ENCODE measurements at regions of chr2 and their contacts with region 1.

Region 1: DNA sequence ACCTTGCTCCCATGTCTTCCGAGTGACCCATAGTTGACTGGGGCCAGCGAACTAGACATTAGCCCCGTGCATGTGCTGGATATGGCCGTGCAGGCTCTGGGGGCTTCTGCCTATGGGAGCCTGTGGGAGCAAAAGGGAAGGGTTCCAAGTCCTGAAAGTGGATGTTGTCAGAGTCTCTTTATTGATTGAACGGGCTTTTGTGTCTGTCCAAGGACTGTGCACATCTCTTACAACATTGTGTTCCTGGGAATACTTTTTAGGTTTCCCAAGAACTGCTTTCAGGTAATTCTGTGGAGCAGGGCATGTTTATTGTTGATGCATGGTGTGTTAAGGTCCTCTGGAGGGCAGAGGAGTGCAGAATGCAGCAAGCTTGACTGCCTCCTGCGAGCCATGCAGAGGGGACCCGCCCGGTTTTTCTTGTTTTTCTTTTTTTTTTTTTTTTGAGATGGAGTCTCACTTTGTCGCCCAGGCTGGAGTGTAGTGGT is 5.0 kb downstream of the RNF144A start:
- DNase-seq: no peak
- H3K4me3 Mint-ChIP-seq: no peak overlapping the region
- H3K27ac Mint-ChIP-seq: no peak overlapping the region
- H3K4me1 Mint-ChIP-seq: peaks cover 86% of the 10 kb centered on the region
- H3K27me3 Mint-ChIP-seq: no peaks in the 10 kb centered on the region

Region 2: DNA sequence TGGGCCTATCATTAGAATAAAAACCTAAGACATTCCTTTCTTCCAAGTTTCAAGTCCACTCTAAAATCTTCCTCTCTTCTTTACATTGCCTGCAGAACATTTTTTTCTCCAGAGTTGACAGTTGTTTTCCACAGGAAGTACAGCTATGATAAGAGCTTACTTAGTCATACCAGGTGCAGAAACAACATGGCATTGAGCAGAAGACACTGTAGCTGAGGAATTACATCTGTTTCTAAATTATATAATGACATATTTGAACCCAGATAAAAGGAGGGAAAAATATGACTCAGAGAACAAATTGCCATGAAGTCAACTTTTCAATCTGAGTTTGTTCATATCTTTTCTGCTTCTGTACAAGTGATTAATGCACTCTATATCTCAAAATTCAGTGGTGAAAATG is 86.8 kb before region 1 on chr2:
- CTCF ChIA-PET with region 1: no interaction called
- POLR2A ChIA-PET with region 1: no interaction called
- DNase-seq: no peak
- H3K4me3 Mint-ChIP-seq: no peak overlapping the region
- H3K27ac Mint-ChIP-seq: no peak overlapping the region
- H3K4me1 Mint-ChIP-seq: peaks cover 36% of the 10 kb centered on the region
- H3K27me3 Mint-ChIP-seq: peaks cover 2% of the 10 kb centered on the region

Region 3: DNA sequence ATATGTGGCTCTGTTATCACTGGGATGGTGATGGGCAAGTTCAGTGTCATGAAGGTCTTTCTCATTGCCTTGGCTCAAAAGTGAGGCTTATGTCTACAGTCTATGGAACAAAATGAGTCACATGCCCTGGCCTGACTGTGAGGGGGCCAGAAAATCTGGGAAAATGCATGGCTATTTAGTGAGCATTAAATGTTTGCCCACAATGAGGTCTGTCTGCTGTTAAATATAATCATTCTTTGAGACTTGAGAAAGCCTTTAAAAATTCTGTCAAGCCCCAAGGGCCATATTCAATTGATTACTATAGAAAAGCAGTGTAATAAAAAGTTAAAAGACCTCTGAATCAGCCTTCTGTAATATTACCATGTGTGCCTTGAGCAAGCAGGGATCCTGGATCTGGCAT is 10.5 kb before region 1 on chr2:
- CTCF ChIA-PET with region 1: interaction called, 20 read pairs
- POLR2A ChIA-PET with region 1: no interaction called
- DNase-seq: no peak
- H3K4me3 Mint-ChIP-seq: peak overlapping the region; percentile 69
- H3K27ac Mint-ChIP-seq: peak overlapping the region; percentile 97
- H3K4me1 Mint-ChIP-seq: peaks cover 98% of the 10 kb centered on the region
- H3K27me3 Mint-ChIP-seq: no peaks in the 10 kb centered on the region

Region 4: DNA sequence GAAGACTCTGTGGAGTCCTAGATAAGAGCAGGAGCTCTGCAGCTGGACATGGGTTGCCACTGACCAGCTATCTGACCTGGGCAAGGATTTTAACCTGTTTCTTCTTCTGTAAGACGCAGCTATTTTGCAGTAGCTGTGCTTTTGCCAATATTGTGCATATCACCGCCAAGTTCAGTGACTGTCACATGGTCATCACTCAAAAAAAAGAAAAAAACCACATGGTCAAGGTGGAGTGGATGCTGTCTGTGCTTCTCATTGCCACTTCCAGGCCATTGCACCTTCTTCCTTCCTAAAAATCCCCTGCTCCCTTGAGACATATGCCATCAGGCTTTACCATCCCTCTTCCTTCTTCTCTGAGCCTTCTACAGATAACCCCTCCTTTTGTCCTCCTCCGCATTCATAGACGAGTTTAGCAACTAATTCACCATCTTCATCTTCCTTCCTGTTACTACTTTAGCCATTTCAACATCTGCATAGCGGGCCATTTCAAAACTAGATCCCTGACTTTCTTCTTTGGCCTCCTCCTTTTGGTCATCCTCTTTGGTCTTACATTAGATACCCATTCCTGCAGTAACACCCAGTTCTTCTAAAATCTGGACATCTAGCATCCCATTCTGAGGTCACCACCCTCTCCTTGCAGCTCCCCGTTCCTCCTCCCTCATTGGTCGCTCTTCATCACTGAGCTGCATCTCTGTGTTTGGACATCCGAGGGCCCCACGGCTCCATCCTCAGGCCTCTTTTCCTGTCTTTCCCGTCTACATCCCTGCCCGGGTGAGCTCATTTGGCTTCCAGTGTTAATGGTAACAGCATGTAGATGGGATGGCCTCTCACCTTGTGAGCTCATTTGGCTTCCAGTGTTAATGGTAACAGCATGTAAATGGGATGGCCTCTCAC is 12.8 kb after region 1 on chr2:
- CTCF ChIA-PET with region 1: interaction called, 10 read pairs
- POLR2A ChIA-PET with region 1: no interaction called
- DNase-seq: no peak
- H3K4me3 Mint-ChIP-seq: no peak overlapping the region
- H3K27ac Mint-ChIP-seq: no peak overlapping the region
- H3K4me1 Mint-ChIP-seq: peaks cover 68% of the 10 kb centered on the region
- H3K27me3 Mint-ChIP-seq: no peaks in the 10 kb centered on the region

Measured in activated CD4-positive, alpha-beta T cell treated with anti-CD3 and anti-CD28 coated beads, Interleukin-2, amount 10 ng/mL, durations not matched to agents 7 days and 5 days (primary cell).